ENCODE measurements at regions of chr4 and their contacts with region 1.

Region 1: GRCh38 chr4:101169044-101170014 is 178.0 kb downstream of the PPP3CA start:
- DNase-seq: peak in 1 of 2 experiments; percentile 15
- H3K4me3 ChIP-seq: no peak overlapping the region
- H3K27ac ChIP-seq: no peak overlapping the region
- H3K4me1 ChIP-seq: no peaks in the 10 kb centered on the region
- H3K27me3 ChIP-seq: no peaks in the 10 kb centered on the region
- CTCF ChIP-seq: peak; percentile 53

Region 2: GRCh38 chr4:101730291-101731117 is 561.2 kb after region 1 on chr4:
- CTCF ChIA-PET with region 1: interaction called, 3 read pairs
- POLR2A ChIA-PET with region 1: no interaction called
- intact Hi-C with region 1: loop called (anchors 5 kb)
- DNase-seq: peak in 1 of 2 experiments; percentile 36
- H3K4me3 ChIP-seq: no peak overlapping the region
- H3K27ac ChIP-seq: no peak overlapping the region
- H3K4me1 ChIP-seq: no peaks in the 10 kb centered on the region
- H3K27me3 ChIP-seq: no peaks in the 10 kb centered on the region
- CTCF ChIP-seq: peak; percentile 73

Measured in PC-9 (cell line).